Calu3 (cell line): ENCODE measurements at regions of chr5 and their contacts with region 1.

Region 1: GRCh38 chr5:59188419-59189225 is 605.7 kb downstream of the RAB3C start:
- DNase-seq: peak; percentile 63
- H3K4me3 Mint-ChIP-seq: peak overlapping the region; percentile 47
- H3K27ac Mint-ChIP-seq: no peak overlapping the region
- H3K4me1 Mint-ChIP-seq: peaks cover under 1% of the 10 kb centered on the region
- H3K27me3 Mint-ChIP-seq: no peaks in the 10 kb centered on the region
- CTCF ChIP-seq: peak; percentile 63

Region 2: GRCh38 chr5:58794875-58795274 is 393.7 kb before region 1 on chr5:
- CTCF ChIA-PET with region 1: no interaction called
- intact Hi-C with region 1: no loop called
- DNase-seq: no peak
- H3K4me3 Mint-ChIP-seq: no peak overlapping the region
- H3K27ac Mint-ChIP-seq: no peak overlapping the region
- H3K4me1 Mint-ChIP-seq: no peaks in the 10 kb centered on the region
- H3K27me3 Mint-ChIP-seq: peaks cover 70% of the 10 kb centered on the region
- CTCF ChIP-seq: no peak

Region 3: GRCh38 chr5:59367791-59368394 is 179.3 kb after region 1 on chr5:
- CTCF ChIA-PET with region 1: interaction called, 16 read pairs
- intact Hi-C with region 1: loop called (anchors 1 kb)
- DNase-seq: peak; percentile 49
- H3K4me3 Mint-ChIP-seq: no peak overlapping the region
- H3K27ac Mint-ChIP-seq: no peak overlapping the region
- H3K4me1 Mint-ChIP-seq: no peaks in the 10 kb centered on the region
- H3K27me3 Mint-ChIP-seq: no peaks in the 10 kb centered on the region
- CTCF ChIP-seq: peak; percentile 84

Region 4: DNA sequence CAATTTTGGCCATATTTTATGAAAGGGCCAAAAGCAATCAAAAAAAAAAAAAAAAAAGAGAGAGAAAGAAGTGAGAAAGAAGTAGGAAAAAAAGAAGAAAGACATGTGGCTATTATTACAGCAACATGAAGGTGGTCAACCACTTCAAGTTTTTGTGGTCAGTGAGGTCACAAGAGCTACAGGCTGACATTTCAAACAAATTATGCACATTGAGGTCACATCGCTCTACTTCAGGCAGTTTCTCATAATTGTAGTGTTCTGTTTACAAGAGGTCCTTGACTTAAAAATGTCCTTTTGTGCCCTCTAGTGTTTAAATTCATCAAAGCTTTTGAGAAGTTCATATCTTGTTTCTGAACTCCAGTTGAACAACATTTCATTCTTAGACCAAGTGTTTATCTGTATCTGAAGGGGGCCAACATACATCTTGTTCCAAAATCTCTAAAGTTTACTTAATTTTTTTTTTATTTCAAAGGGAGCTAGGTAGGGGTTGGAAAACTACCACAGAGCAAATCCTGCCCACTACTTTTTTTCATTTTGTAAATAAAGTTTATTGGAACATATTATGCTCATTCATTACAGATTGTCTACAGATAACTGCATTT is 191.8 kb after region 1 on chr5:
- CTCF ChIA-PET with region 1: interaction called, 12 read pairs
- intact Hi-C with region 1: loop called (anchors 1 kb)
- DNase-seq: no peak
- H3K4me3 Mint-ChIP-seq: no peak overlapping the region
- H3K27ac Mint-ChIP-seq: no peak overlapping the region
- H3K4me1 Mint-ChIP-seq: no peaks in the 10 kb centered on the region
- H3K27me3 Mint-ChIP-seq: no peaks in the 10 kb centered on the region
- CTCF ChIP-seq: peak; percentile 37

Region 5: DNA sequence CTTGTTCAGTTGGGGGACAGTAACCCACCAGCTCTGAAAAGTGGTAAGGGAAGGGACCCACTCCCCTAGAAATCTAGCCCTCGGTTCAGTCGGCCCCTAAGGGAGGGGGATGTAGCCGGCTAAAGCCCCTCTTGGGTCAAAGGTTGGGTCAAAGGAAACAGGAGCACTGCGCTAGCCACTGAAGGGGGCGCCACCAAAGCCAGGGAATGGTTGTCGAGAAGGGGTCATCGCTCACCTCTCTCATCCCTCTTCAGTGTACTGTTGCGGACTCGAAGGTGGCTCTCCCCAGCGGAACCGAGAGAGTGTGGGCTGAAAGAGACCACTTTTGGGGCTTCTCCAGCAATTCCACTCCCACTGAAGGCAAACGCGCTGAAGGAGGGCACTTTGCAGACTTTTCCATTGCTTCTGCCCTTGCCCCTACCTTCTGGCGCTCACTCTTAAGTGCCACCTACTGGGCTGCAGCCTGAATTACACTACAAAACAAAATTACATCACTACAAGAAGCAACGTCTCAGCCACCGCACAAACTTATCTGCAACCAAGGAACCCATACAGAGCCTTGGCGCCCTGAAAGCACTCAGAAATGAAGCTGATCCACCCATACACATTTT is 308.0 kb after region 1 on chr5:
- CTCF ChIA-PET with region 1: no interaction called
- intact Hi-C with region 1: loop called (anchors 10 kb)
- DNase-seq: peak; percentile 27
- H3K4me3 Mint-ChIP-seq: no peak overlapping the region
- H3K27ac Mint-ChIP-seq: no peak overlapping the region
- H3K4me1 Mint-ChIP-seq: no peaks in the 10 kb centered on the region
- H3K27me3 Mint-ChIP-seq: no peaks in the 10 kb centered on the region
- CTCF ChIP-seq: peak; percentile 56